Psoas muscle (tissue), 8 donors: ENCODE measurements at regions of chr16 and their contacts with region 1.

Region 1: DNA sequence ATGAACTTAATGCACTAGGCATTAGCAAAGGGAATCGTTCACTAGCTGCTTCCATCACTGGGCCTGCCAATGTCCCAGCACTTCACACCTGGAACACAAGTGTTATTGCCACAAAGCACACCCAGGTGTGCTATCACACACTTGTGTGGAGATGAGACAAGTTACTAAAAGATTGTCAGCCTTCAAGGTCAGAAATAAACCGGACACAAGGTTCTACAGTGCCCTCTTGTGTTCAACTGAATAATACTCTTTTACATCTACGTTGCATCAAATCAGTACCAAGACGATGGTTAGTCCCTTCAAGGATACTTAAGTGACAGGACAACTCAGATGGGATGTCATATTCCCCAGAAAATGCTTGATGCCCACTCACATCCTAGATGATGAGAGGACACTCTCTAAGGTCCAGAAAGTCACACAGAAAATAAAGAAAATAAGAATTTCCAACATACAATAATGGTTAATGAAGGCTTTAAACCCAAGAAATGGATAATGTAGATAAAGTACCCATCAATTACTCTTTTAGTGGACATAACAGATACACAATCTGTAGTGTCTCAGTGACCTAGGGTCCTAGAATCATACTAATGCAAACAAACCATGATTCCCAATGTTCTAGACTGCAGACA is 16.4 kb upstream of the GLG1 start:
- DNase-seq: no peak
- ATAC-seq: peak; percentile 77 to 87 (median 80)
- H3K4me3 ChIP-seq: no peak overlapping the region
- H3K27ac ChIP-seq: no peak overlapping the region
- H3K4me1 ChIP-seq: no peaks in the 10 kb centered on the region
- H3K27me3 ChIP-seq: no peaks in the 10 kb centered on the region
- CTCF ChIP-seq: peak; percentile 73

Region 2: DNA sequence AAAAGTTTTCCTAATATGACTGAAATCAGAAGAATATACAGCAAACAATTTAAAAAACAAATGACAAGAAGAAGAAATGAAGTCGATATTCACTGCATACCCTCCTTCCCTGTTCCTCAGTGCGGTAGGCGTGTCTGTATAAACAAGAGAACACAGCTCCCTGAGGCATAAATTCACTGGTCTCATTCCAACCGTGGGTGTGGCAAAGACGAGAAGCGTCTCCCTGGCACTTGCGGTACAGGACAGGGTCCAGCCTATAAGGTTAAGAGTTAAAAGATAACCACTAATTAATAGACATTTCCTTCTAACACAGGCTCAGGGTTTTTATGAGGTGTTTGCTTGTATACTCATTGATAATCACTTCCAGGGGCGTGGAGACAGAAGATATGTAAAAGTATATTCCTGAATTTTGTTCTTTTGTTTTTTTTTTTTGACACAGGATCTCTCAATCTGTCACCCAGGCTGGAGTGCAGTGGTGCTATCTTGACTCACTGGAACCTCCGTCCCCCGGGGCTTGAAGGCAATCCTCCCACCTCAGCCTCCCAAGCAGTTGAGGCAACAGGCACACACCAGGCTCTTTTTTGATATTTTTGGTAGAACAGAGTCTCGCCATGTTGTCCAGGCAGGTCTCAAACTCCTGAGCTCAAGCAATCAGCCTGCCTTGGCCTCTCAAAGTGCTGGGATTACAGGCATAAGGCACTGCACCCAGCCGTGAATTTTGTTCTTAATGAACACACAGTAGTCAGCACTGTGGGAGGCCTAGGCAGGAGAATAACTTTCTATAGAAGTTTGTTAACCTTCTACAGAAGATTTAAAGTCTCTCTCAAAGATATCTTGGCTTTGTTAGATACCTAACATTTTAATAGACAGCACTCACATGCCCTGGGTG is 142.9 kb before region 1 on chr16:
- intact Hi-C with region 1: loop called in 1 of 2 experiments (anchors 5 kb)
- DNase-seq: peak in 1 of 2 donors; percentile 24
- ATAC-seq: peak in 3 of 4 donors; percentile 36 to 75 (median 67)
- H3K4me3 ChIP-seq: no peak overlapping the region
- H3K27ac ChIP-seq: no peak overlapping the region
- H3K4me1 ChIP-seq: no peaks in the 10 kb centered on the region
- H3K27me3 ChIP-seq: no peaks in the 10 kb centered on the region
- CTCF ChIP-seq: no peak

Region 3: GRCh38 chr16:74501484-74502479 is 121.5 kb before region 1 on chr16:
- intact Hi-C with region 1: loop called (anchors 5 kb)
- DNase-seq: no peak
- ATAC-seq: peak; percentile 42 to 58 (median 48)
- H3K4me3 ChIP-seq: no peak overlapping the region
- H3K27ac ChIP-seq: peak overlapping the region; percentile 63
- H3K4me1 ChIP-seq: peaks cover 12% of the 10 kb centered on the region
- H3K27me3 ChIP-seq: no peaks in the 10 kb centered on the region
- CTCF ChIP-seq: no peak